SK-N-SH (cell line): ENCODE measurements at regions of chr7 and their contacts with region 1.

Region 1: GRCh38 chr7:4973728-4974198 is 14.8 kb upstream of the MMD2 start:
- DNase-seq: peak; percentile 96
- H3K4me3 ChIP-seq: peak overlapping the region; percentile 66 to 95
- H3K27ac ChIP-seq: peak overlapping the region; percentile 79 to 86
- H3K4me1 ChIP-seq: no peaks in the 10 kb centered on the region; a peak in 2 of 4 replicates
- H3K27me3 ChIP-seq: no peaks in the 10 kb centered on the region
- CTCF ChIP-seq: peak; percentile 85
- EP300 ChIP-seq: no peak
- RAD21 ChIP-seq: peak; percentile 71

Region 2: GRCh38 chr7:4753711-4754432 is 219.9 kb before region 1 on chr7:
- CTCF ChIA-PET with region 1: no interaction called
- POLR2A ChIA-PET with region 1: no interaction called
- DNase-seq: peak; percentile 95
- H3K4me3 ChIP-seq: peak overlapping the region in 1 of 2 experiments; percentile 42; a peak in 1 of 4 replicates
- H3K27ac ChIP-seq: no peak overlapping the region
- H3K4me1 ChIP-seq: no peaks in the 10 kb centered on the region; a peak in 1 of 4 replicates
- H3K27me3 ChIP-seq: no peaks in the 10 kb centered on the region
- CTCF ChIP-seq: peak; percentile 98
- EP300 ChIP-seq: no peak
- RAD21 ChIP-seq: peak; percentile 88

Region 3: DNA sequence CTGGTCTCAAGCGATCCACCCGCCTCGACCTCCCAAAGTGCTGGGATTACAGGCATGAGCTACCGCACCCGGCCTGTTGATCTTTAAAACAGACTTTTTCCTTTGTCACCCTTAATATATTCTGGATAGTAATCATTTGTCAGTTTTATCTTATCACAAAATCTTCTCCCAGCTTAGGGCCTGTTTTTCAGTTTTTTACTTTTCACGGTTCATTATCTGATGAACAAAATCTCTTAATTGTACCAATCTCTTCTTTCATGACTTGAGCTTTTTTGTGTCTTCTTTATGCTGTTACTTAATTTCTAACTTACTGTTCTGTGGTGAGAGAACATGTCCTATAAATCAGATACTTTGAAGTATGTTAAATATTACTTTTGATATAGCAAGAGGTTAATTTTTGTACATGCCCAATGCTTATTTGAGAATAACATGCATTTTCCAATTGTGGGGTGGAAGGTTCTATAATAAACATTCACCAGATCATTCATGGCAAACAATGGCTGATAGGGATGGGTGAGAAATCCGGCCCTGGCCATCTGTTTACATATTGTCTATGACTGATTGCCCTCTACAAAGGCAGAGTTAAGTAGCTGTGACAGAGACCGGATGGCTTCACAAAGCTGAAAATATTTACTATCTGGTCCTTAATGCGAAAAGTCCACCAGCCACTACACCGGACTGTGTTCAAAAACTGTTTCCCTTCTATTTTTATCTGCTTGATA is 117.3 kb before region 1 on chr7:
- CTCF ChIA-PET with region 1: interaction called, 10 read pairs
- POLR2A ChIA-PET with region 1: no interaction called
- DNase-seq: peak; percentile 85
- H3K4me3 ChIP-seq: no peak overlapping the region
- H3K27ac ChIP-seq: peak overlapping the region in 1 of 2 experiments; percentile 82; a peak in 2 of 4 replicates
- H3K4me1 ChIP-seq: peaks cover 0 to 11% of the 10 kb centered on the region in 2 experiments; a peak in 2 of 4 replicates
- H3K27me3 ChIP-seq: no peaks in the 10 kb centered on the region
- CTCF ChIP-seq: no peak
- EP300 ChIP-seq: peak in 1 of 2 experiments; percentile 48; a peak in 2 of 4 replicates
- RAD21 ChIP-seq: no peak; the same call in 1 of the 2 replicates

Region 4: GRCh38 chr7:4951903-4952636 is 21.7 kb before region 1 on chr7:
- CTCF ChIA-PET with region 1: interaction called, 17 read pairs
- POLR2A ChIA-PET with region 1: no interaction called
- DNase-seq: no peak
- H3K4me3 ChIP-seq: no peak overlapping the region
- H3K27ac ChIP-seq: no peak overlapping the region
- H3K4me1 ChIP-seq: no peaks in the 10 kb centered on the region
- H3K27me3 ChIP-seq: no peaks in the 10 kb centered on the region
- CTCF ChIP-seq: no peak
- EP300 ChIP-seq: no peak
- RAD21 ChIP-seq: no peak

Region 5: DNA sequence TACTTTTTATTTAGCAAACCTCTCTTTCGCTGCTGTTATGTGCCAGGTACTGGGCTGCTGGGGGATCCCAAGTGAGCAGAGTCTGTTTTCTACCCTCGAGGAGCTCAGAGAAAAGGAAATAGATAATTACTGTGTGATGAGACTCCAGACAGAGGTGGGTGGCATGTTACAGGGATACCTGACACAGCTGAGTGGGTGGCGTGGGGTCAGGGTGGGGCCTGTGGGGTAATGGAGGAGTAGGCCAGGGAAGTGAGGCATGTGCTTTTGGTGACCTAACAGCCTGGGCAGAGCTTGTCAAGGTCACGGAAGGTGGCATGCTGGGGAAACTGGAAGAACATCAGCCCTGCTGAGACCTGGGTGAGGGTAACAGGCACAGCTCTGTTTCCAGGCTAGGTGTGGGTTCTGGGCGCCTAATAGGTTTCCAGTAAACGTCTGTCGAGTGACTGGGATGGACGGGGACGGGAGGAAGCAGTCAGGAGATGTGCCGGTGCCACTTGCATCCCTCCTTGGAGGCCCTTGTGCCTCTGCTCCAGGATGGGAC is 21.7 kb after region 1 on chr7:
- CTCF ChIA-PET with region 1: interaction called, 12 read pairs
- POLR2A ChIA-PET with region 1: no interaction called
- DNase-seq: no peak
- H3K4me3 ChIP-seq: no peak overlapping the region
- H3K27ac ChIP-seq: no peak overlapping the region
- H3K4me1 ChIP-seq: no peaks in the 10 kb centered on the region
- H3K27me3 ChIP-seq: no peaks in the 10 kb centered on the region
- CTCF ChIP-seq: no peak
- EP300 ChIP-seq: no peak
- RAD21 ChIP-seq: no peak

Region 6: GRCh38 chr7:5117095-5117970 is 143.6 kb after region 1 on chr7:
- CTCF ChIA-PET with region 1: no interaction called
- POLR2A ChIA-PET with region 1: no interaction called
- DNase-seq: no peak
- H3K4me3 ChIP-seq: no peak overlapping the region
- H3K27ac ChIP-seq: no peak overlapping the region
- H3K4me1 ChIP-seq: no peaks in the 10 kb centered on the region
- H3K27me3 ChIP-seq: peaks cover 14% of the 10 kb centered on the region; the same call in 1 of the 2 replicates
- CTCF ChIP-seq: no peak
- EP300 ChIP-seq: no peak
- RAD21 ChIP-seq: no peak

Region 7: GRCh38 chr7:5284304-5285281 is 310.8 kb after region 1 on chr7:
- CTCF ChIA-PET with region 1: no interaction called
- POLR2A ChIA-PET with region 1: no interaction called
- DNase-seq: peak; percentile 90
- H3K4me3 ChIP-seq: peak overlapping the region in 1 of 2 experiments; percentile 63; a peak in 1 of 4 replicates
- H3K27ac ChIP-seq: peak overlapping the region in 1 of 2 experiments; percentile 87; a peak in 2 of 4 replicates
- H3K4me1 ChIP-seq: peaks cover 4 to 16% of the 10 kb centered on the region in 2 experiments; a peak in 1 of 4 replicates
- H3K27me3 ChIP-seq: no peaks in the 10 kb centered on the region
- CTCF ChIP-seq: peak; percentile 39; the same call in 1 of the 2 replicates
- EP300 ChIP-seq: peak in 1 of 2 experiments; percentile 59; a peak in 1 of 4 replicates
- RAD21 ChIP-seq: peak; percentile 86